Right ventricle myocardium inferior (tissue), 1 donor: ENCODE measurements at regions of chr10 and their contacts with region 1.

Region 1: GRCh38 chr10:35588836-35589235 is 16.3 kb upstream of the GJD4 start:
- DNase-seq: no peak
- ATAC-seq: no peak

Region 2: GRCh38 chr10:35480142-35480541 is 108.7 kb before region 1 on chr10:
- intact Hi-C with region 1: no loop called
- DNase-seq: no peak
- ATAC-seq: no peak

Region 3: GRCh38 chr10:35607475-35608327 is 18.9 kb after region 1 on chr10:
- intact Hi-C with region 1: loop called (anchors 1 kb)
- DNase-seq: no peak
- ATAC-seq: no peak